IMR-90 (cell line): ENCODE measurements at regions of chr2 and their contacts with region 1.

Region 1: GRCh38 chr2:188529746-188530145 is 238.1 kb downstream of the GULP1 start:
- DNase-seq: peak; percentile 27
- ATAC-seq: no peak
- H3K4me3 ChIP-seq: no peak overlapping the region
- H3K27ac ChIP-seq: no peak overlapping the region
- H3K4me1 ChIP-seq: peaks cover 2% of the 10 kb centered on the region; the same call in 1 of the 2 replicates
- H3K27me3 ChIP-seq: no peaks in the 10 kb centered on the region
- CTCF ChIP-seq: no peak
- POLR2A ChIP-seq: no peak
- RAD21 ChIP-seq: no peak

Region 2: DNA sequence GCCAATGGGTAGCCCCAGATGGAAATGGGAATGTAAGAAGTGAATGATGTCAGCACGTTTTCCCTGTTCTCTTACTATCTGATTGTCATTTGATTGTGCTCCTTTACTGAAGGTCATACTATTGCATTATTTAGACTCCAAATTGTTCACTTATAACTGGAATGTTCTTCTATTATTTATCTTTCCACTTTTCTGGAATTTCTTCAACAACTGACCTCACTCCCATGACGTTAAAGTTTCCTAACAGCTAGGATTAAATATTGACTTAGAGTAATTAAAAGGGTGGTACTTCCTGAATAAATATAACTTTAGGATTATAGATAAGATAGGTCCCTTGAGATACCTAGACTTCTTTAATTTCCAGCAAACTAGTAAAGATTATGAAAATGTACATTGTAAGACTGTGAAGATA is 248.9 kb before region 1 on chr2:
- CTCF ChIA-PET with region 1: no interaction called
- POLR2A ChIA-PET with region 1: no interaction called
- dilution Hi-C with region 1: no loop called
- in situ Hi-C with region 1: no loop called
- intact Hi-C with region 1: no loop called
- DNase-seq: no peak
- ATAC-seq: no peak
- H3K4me3 ChIP-seq: no peak overlapping the region
- H3K27ac ChIP-seq: no peak overlapping the region
- H3K4me1 ChIP-seq: no peaks in the 10 kb centered on the region
- H3K27me3 ChIP-seq: no peaks in the 10 kb centered on the region
- CTCF ChIP-seq: no peak
- POLR2A ChIP-seq: no peak
- RAD21 ChIP-seq: no peak

Region 3: DNA sequence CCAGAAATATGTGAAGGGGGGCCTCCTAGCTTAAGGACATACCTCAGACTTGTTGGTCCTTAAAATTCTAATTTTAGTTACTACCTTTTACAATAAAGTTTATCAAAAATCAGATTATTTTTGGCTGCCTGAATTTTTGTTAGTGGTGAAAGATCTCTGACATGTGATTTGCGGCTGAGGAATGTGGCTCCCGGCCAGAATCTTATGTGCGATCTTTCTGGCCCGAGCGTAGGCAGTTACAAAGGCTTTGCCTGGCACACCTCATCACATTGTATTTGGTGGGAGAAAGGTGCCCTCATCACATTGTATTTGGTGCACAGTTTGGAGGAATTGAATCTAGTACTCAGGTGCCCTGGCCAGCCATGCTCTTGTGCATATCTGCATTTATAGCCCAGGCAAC is 51.0 kb after region 1 on chr2:
- CTCF ChIA-PET with region 1: no interaction called
- POLR2A ChIA-PET with region 1: no interaction called
- dilution Hi-C with region 1: no loop called
- in situ Hi-C with region 1: no loop called
- intact Hi-C with region 1: no loop called
- DNase-seq: no peak
- ATAC-seq: no peak
- H3K4me3 ChIP-seq: no peak overlapping the region
- H3K27ac ChIP-seq: no peak overlapping the region
- H3K4me1 ChIP-seq: no peaks in the 10 kb centered on the region
- H3K27me3 ChIP-seq: no peaks in the 10 kb centered on the region
- CTCF ChIP-seq: no peak
- POLR2A ChIP-seq: no peak
- RAD21 ChIP-seq: no peak

Region 4: DNA sequence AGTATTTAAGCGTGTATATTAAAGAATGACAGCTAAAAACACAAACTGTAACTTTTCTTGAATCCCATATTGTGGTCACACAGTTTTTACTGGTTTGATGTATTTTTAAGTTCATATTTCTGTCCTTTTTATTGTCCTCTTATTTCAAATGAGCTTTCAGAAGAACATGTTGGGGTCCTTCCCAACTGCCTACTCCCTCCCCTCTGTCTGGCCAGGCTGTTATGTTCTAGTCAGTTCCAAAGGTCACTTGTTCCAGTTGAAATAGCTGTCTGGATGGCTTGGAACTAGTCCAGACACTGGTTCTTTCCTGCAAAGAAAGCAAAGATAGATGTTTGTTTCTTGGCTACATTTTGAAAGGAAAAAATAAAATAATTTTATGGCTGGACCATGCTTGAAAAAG is 68.8 kb after region 1 on chr2:
- CTCF ChIA-PET with region 1: no interaction called
- POLR2A ChIA-PET with region 1: no interaction called
- dilution Hi-C with region 1: no loop called
- in situ Hi-C with region 1: no loop called
- intact Hi-C with region 1: loop called (anchors 5 kb)
- DNase-seq: no peak
- ATAC-seq: no peak
- H3K4me3 ChIP-seq: no peak overlapping the region
- H3K27ac ChIP-seq: no peak overlapping the region
- H3K4me1 ChIP-seq: peaks cover 2% of the 10 kb centered on the region; the same call in 1 of the 2 replicates
- H3K27me3 ChIP-seq: no peaks in the 10 kb centered on the region
- CTCF ChIP-seq: no peak
- POLR2A ChIP-seq: no peak
- RAD21 ChIP-seq: no peak